Transverse colon (tissue), 4 donors: ENCODE measurements at regions of chr17 and their contacts with region 1.

Region 1: DNA sequence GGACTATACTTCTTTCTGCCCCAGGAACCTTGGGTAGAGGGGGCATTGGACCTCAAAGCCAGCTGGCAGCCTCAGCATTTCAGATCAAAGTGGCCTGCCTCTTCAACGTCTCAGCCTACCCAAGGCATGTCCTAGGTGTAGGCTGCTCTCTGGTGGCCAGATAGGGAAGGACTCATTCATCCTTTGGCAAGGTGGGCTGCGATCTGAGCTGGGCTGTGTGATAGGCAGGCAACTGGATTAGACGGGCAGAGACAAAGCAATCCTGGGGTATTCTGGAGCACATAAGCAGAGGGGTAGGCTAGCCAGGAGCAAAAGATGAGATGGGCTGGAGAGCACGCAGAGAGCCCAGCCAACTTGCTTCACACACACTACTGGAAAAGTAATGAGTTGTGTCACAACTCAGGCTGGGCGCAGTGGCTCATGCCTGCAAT is 8.8 kb upstream of the NAGLU start:
- DNase-seq: peak; percentile 76
- H3K4me3 ChIP-seq: no peak overlapping the region
- H3K27ac ChIP-seq: peak overlapping the region; percentile 3 to 60 (median 32)
- H3K4me1 ChIP-seq: peaks cover 20 to 53% (median 34%) of the 10 kb centered on the region in 4 donors
- H3K27me3 ChIP-seq: no peaks in the 10 kb centered on the region
- CTCF ChIP-seq: peak; percentile 81 to 89 (median 85)
- EP300 ChIP-seq: no peak
- POLR2A ChIP-seq: no peak

Region 2: DNA sequence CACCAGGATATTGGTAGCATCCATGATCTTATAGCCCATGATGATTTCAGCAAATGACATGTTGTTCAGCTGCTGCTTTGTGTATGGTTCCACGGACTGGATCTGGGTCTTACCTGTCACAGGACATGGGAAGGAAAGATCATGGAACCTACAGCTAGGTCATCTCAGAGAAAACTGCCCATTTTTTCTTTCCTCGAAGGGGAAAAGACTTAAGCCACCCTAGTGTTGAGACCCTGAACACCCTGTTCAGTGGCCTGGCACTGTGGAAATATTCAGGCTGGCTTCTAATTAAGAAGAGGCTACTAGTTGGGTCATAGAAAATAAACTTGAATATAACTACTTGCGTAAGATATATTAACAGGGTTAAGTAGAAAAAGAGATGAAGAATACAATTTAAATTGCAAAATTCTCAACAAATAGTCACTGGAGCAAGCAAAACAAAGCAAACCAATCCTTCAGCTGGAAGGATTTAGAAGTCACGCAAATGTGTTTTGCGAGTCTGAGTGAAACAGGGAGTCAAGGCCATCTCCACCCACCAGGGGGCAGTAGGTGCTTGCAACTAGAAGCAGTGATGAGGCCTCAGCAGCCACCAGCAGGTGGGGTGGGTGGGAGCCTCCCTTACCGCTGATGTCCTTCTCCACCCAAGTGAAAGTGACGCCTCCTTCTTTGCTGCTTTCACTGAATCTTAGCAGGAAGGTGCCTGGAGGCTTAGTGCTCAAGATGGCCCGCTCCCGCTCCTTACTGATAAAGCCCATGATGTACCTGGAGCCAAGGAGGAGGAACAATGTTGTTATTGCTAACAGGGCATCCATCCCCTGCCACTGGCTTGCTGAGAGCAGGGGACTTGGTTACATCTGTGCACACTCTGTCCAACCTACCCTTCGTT is 204.7 kb before region 1 on chr17:
- in situ Hi-C with region 1: loop called (anchors 5 to 25 kb)
- intact Hi-C with region 1: loop called (anchors 5 kb)
- DNase-seq: peak; percentile 95
- H3K4me3 ChIP-seq: no peak overlapping the region
- H3K27ac ChIP-seq: peak overlapping the region in 3 of 4 donors; percentile 7 to 48 (median 17)
- H3K4me1 ChIP-seq: peaks cover 0 to 18% (median 2%) of the 10 kb centered on the region in 4 donors
- H3K27me3 ChIP-seq: no peaks in the 10 kb centered on the region
- CTCF ChIP-seq: peak; percentile 96 to 100 (median 99)
- EP300 ChIP-seq: no peak
- POLR2A ChIP-seq: no peak

Region 3: DNA sequence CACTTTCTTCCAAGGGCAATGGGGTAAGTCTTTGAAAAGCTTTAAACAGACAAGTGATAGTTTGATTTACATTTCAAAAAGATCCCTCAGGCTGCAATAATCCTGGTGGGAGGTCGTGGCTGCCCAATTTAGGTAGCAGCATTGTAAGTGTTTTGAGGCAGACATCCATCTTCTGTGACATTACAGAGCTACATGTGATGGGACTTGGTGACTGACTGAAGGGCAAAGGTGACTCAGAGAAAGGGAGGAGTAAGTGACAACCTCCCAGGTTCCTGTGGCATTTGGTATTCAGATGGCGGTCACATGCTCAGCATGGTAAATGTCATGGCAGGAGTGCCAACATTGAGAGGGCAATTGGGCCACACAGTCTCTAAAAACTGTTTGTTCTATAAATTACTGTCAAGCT is 165.5 kb before region 1 on chr17:
- in situ Hi-C with region 1: no loop called
- intact Hi-C with region 1: no loop called
- DNase-seq: peak; percentile 31
- H3K4me3 ChIP-seq: no peak overlapping the region
- H3K27ac ChIP-seq: peak overlapping the region in 2 of 4 donors; percentile 28 to 40
- H3K4me1 ChIP-seq: peaks cover 22 to 71% (median 24%) of the 10 kb centered on the region in 4 donors
- H3K27me3 ChIP-seq: no peaks in the 10 kb centered on the region
- CTCF ChIP-seq: no peak
- EP300 ChIP-seq: no peak
- POLR2A ChIP-seq: no peak

Region 4: GRCh38 chr17:42428141-42428944 is 98.9 kb before region 1 on chr17:
- in situ Hi-C with region 1: loop called in 3 of 4 experiments (anchors 10 to 25 kb)
- intact Hi-C with region 1: loop called (anchors 10 kb)
- DNase-seq: peak; percentile 57
- H3K4me3 ChIP-seq: no peak overlapping the region
- H3K27ac ChIP-seq: peak overlapping the region in 3 of 4 donors; percentile 8 to 32 (median 13)
- H3K4me1 ChIP-seq: peaks cover 5 to 35% (median 17%) of the 10 kb centered on the region in 4 donors
- H3K27me3 ChIP-seq: peaks cover 5% of the 10 kb centered on the region
- CTCF ChIP-seq: peak; percentile 57 to 78 (median 65)
- EP300 ChIP-seq: no peak
- POLR2A ChIP-seq: no peak

Region 5: GRCh38 chr17:42438600-42439567 is 88.4 kb before region 1 on chr17:
- in situ Hi-C with region 1: loop called in 2 of 4 experiments (anchors 10 kb)
- intact Hi-C with region 1: no loop called
- DNase-seq: peak; percentile 56
- H3K4me3 ChIP-seq: no peak overlapping the region
- H3K27ac ChIP-seq: no peak overlapping the region
- H3K4me1 ChIP-seq: peaks cover 0 to 29% (median 8%) of the 10 kb centered on the region in 4 donors
- H3K27me3 ChIP-seq: no peaks in the 10 kb centered on the region
- CTCF ChIP-seq: peak; percentile 25 to 46 (median 38)
- EP300 ChIP-seq: no peak
- POLR2A ChIP-seq: no peak

Region 6: GRCh38 chr17:42456223-42457131 is 70.8 kb before region 1 on chr17:
- in situ Hi-C with region 1: no loop called
- intact Hi-C with region 1: no loop called
- DNase-seq: no peak
- H3K4me3 ChIP-seq: no peak overlapping the region
- H3K27ac ChIP-seq: peak overlapping the region; percentile 94 to 99 (median 97)
- H3K4me1 ChIP-seq: peaks cover 10 to 41% (median 19%) of the 10 kb centered on the region in 4 donors
- H3K27me3 ChIP-seq: no peaks in the 10 kb centered on the region
- CTCF ChIP-seq: no peak
- EP300 ChIP-seq: no peak
- POLR2A ChIP-seq: no peak